ENCODE measurements at regions of chr11 and their contacts with region 1.

Region 1: DNA sequence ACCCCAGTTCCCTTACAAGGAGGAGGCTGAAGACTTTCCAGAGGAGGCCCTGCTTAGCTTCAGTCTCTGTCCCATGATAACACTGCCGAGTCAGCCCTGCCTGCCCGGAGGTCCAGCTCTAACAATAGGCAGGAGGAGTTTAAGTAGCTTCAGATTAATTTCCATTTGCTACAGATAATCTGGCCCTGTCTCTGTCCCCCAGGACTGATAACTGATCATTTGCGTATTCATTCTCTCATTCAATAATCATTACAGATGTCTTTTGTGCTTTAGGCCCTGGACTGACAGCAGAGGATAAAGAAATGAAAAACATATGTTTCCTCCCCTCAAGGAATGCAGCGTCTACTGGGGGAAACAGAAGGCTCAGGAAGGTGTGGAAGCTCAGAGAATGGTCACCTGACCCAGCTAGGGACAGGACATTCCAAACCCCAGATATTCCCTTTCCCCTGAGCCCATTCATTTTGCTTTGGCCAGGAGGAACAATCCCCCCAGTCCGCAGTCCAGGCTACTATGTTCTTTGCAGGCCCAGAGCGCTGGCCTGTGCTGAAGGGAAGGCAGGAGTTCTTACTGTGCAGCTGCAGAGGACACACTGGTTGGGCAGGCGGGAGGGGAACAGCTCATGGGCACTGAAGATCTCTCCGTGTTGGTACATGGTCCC is 20.8 kb downstream of the CHRDL2 start:
- DNase-seq: no peak
- H3K4me3 ChIP-seq: no peak overlapping the region
- H3K27ac ChIP-seq: peak overlapping the region; percentile 39 to 53
- H3K4me1 ChIP-seq: no peaks in the 10 kb centered on the region
- H3K27me3 ChIP-seq: no peaks in the 10 kb centered on the region
- CTCF ChIP-seq: no peak
- POLR2A ChIP-seq: no peak

Region 2: DNA sequence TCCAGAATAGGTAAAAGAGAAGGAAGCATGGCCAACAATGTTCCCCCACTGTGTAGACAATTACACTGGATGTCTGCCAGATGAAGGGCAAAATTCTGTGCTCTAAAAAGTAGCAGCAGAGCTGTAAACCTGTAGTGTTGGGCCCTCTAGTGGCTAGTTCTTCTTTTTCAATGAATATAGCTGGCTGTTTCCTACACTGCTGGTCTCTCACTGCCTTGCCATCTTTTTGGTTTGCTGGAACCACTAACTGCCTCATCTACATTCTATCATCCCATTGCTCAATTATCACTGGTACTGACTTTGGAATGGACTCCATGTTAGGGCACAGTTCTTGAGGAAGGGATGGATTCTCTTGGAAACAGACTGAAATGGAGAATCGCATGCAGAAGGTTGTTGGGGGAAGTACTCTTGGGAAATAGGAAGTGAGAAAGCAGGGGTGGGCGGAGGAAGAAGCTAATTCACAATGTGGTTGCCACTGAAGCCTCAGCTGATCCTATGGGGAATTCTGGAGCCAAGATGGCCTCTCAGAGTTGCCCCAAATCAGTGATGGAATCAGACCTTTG is 261.0 kb before region 1 on chr11:
- intact Hi-C with region 1: no loop called
- DNase-seq: peak; percentile 26 to 73
- H3K4me3 ChIP-seq: no peak overlapping the region
- H3K27ac ChIP-seq: peak overlapping the region in 1 of 2 donors; percentile 22
- H3K4me1 ChIP-seq: peaks cover under 1 to 2% of the 10 kb centered on the region in 2 donors
- H3K27me3 ChIP-seq: no peaks in the 10 kb centered on the region
- CTCF ChIP-seq: peak; percentile 71 to 91 (median 83)
- POLR2A ChIP-seq: no peak

Region 3: GRCh38 chr11:74611369-74611861 is 99.0 kb before region 1 on chr11:
- intact Hi-C with region 1: loop called (anchors 10 kb)
- DNase-seq: no peak
- H3K4me3 ChIP-seq: no peak overlapping the region
- H3K27ac ChIP-seq: peak overlapping the region; percentile 70 to 90
- H3K4me1 ChIP-seq: peaks cover 0 to 13% of the 10 kb centered on the region in 2 donors
- H3K27me3 ChIP-seq: no peaks in the 10 kb centered on the region
- CTCF ChIP-seq: peak; percentile 44 to 63 (median 52)
- POLR2A ChIP-seq: no peak

Region 4: GRCh38 chr11:74826901-74827300 is 116.5 kb after region 1 on chr11:
- intact Hi-C with region 1: no loop called
- DNase-seq: no peak
- H3K4me3 ChIP-seq: no peak overlapping the region
- H3K27ac ChIP-seq: no peak overlapping the region
- H3K4me1 ChIP-seq: no peaks in the 10 kb centered on the region
- H3K27me3 ChIP-seq: no peaks in the 10 kb centered on the region
- CTCF ChIP-seq: no peak
- POLR2A ChIP-seq: no peak

Region 5: GRCh38 chr11:75055471-75055870 is 345.1 kb after region 1 on chr11:
- intact Hi-C with region 1: no loop called
- DNase-seq: no peak
- H3K4me3 ChIP-seq: no peak overlapping the region
- H3K27ac ChIP-seq: no peak overlapping the region
- H3K4me1 ChIP-seq: no peaks in the 10 kb centered on the region
- H3K27me3 ChIP-seq: no peaks in the 10 kb centered on the region
- CTCF ChIP-seq: no peak
- POLR2A ChIP-seq: no peak

Measured in uterus (tissue), 4 donors.